ENCODE measurements at regions of chr16 and their contacts with region 1.

Region 1: GRCh38 chr16:12067714-12068401 is 91.3 kb downstream of the SNX29 start:
- DNase-seq: peak; percentile 65
- ATAC-seq: peak; percentile 64
- H3K4me3 Mint-ChIP-seq: no peak overlapping the region
- H3K27ac Mint-ChIP-seq: no peak overlapping the region
- H3K4me1 Mint-ChIP-seq: no peaks in the 10 kb centered on the region
- H3K27me3 Mint-ChIP-seq: no peaks in the 10 kb centered on the region

Region 2: GRCh38 chr16:11949527-11949926 is 118.3 kb before region 1 on chr16:
- CTCF ChIA-PET with region 1: interaction called, 45 read pairs
- POLR2A ChIA-PET with region 1: no interaction called
- DNase-seq: peak; percentile 34
- ATAC-seq: peak; percentile 44
- H3K4me3 Mint-ChIP-seq: no peak overlapping the region
- H3K27ac Mint-ChIP-seq: no peak overlapping the region
- H3K4me1 Mint-ChIP-seq: no peaks in the 10 kb centered on the region
- H3K27me3 Mint-ChIP-seq: no peaks in the 10 kb centered on the region

Region 3: GRCh38 chr16:11964761-11965551 is 102.9 kb before region 1 on chr16 and contains the start of gene TNFRSF17:
- CTCF ChIA-PET with region 1: interaction called, 10 read pairs
- POLR2A ChIA-PET with region 1: interaction called, 3 read pairs
- DNase-seq: no peak
- ATAC-seq: no peak
- H3K4me3 Mint-ChIP-seq: no peak within 1 kb of the TSS
- H3K27ac Mint-ChIP-seq: no peak within 1 kb of the TSS
- H3K4me1 Mint-ChIP-seq: no peaks in the 10 kb centered on the region
- H3K27me3 Mint-ChIP-seq: peaks cover 3% of the 10 kb centered on the region
- total RNA-seq, gene TNFRSF17: not detected

Region 4: DNA sequence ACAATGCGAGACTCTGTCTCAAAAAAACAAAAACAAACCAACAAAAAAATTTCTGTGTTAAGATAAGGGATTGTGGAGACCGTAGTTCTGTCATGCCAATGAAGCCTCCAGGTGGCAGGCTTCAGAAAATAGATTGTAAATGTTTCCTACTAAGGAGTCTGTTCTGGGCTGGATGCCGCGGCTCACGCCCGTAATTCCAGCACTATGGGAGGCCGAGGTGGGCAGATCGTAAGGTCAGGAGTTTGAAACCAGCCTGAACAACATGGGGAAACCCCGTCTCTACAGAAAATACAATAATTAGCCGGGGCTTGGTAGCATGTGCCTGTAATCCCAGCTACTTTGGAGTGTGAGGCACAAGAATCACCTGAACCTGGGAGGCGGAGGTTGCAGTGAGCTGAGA is 95.7 kb before region 1 on chr16:
- CTCF ChIA-PET with region 1: interaction called, 10 read pairs
- POLR2A ChIA-PET with region 1: interaction called, 3 read pairs
- DNase-seq: no peak
- ATAC-seq: no peak
- H3K4me3 Mint-ChIP-seq: no peak overlapping the region
- H3K27ac Mint-ChIP-seq: no peak overlapping the region
- H3K4me1 Mint-ChIP-seq: peaks cover 15% of the 10 kb centered on the region
- H3K27me3 Mint-ChIP-seq: no peaks in the 10 kb centered on the region

Region 5: DNA sequence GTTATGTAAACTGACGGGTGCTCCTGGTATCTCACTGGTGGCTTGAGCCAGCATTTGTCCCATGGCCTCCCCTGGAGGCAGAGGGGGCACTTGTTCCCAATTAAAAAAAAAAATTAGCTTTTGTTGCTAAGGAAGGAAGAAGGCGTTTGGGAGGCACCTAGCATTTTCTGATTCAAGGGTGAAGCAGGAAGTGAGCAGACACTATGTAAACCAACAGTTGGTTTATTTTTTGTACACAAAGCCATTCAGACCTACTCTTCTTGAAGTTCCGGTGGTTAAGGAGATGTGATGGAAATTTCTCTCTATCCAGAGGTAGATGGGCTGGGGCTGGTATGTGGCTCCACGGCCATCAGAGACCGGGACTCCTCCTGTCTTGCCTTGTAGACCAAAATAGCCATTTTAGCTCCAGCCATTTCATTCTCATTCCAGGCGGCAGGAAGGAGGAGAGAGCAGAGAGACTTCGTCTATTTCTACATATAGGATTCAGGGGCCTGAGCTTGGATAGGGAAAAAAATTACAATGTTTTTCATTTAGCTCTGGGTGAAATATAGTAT is 11.6 kb after region 1 on chr16:
- CTCF ChIA-PET with region 1: interaction called, 31 read pairs
- POLR2A ChIA-PET with region 1: no interaction called
- DNase-seq: no peak
- ATAC-seq: peak; percentile 50
- H3K4me3 Mint-ChIP-seq: peak overlapping the region; percentile 51
- H3K27ac Mint-ChIP-seq: peak overlapping the region; percentile 87
- H3K4me1 Mint-ChIP-seq: peaks cover 78% of the 10 kb centered on the region
- H3K27me3 Mint-ChIP-seq: no peaks in the 10 kb centered on the region

Region 6: DNA sequence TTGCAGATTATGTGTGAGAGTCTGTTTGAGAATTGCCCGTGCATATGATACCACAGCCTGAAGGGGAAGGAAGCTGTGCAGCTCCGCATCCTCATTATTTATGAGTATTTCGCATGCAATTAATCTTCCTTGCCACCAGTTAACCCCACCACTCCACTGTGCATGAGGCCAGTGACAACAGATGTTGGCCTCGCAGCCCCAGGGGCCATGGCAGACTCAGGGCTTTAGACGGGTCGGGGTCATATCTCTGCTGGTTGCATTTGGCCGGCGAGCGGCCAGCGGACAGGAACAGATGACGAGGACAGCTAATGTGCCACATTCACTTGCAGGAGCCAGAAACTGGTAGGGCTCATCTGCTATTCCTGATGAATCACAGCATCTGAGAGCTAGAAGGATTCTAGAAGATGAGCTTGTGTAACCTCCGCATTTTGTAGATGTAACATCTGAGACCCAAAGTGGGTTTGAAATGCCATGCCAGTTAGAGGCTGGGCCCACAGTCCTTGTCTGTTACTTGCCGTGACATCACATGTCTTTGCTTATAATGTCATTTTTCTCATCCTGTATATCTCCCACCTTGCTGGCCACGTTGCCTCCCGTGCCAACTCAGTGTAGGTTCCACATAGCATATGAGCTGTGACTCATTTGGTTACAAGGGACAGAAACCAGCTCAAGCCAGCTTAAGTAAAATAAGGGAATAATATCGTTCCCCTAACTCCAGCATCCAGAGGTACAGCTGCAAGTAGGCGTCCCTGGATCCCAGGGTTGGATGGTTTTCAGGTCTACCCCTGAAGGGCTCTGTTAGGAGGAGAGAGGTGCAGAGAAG is 45.9 kb after region 1 on chr16:
- CTCF ChIA-PET with region 1: no interaction called
- POLR2A ChIA-PET with region 1: no interaction called
- DNase-seq: no peak
- ATAC-seq: no peak
- H3K4me3 Mint-ChIP-seq: no peak overlapping the region
- H3K27ac Mint-ChIP-seq: no peak overlapping the region
- H3K4me1 Mint-ChIP-seq: no peaks in the 10 kb centered on the region
- H3K27me3 Mint-ChIP-seq: no peaks in the 10 kb centered on the region

Measured in activated CD8-positive, alpha-beta T cell treated with anti-CD3 and anti-CD28 coated beads, Interleukin-2, amount 10 ng/mL, durations not matched to agents 7 days and 5 days (primary cell).